CD4-positive, alpha-beta memory T cell (primary cell): ENCODE measurements at regions of chr9 and their contacts with region 1.

Region 1: GRCh38 chr9:126722252-126723078 is 82.4 kb upstream of the ZBTB43 start:
- DNase-seq: peak; percentile 84 to 89 (median 85)
- H3K4me3 ChIP-seq: peak overlapping the region; percentile 29 to 80
- H3K4me3 Mint-ChIP-seq: peak overlapping the region; percentile 86 to 96 (median 90)
- H3K27ac ChIP-seq: peak overlapping the region; percentile 89
- H3K27ac Mint-ChIP-seq: peak overlapping the region; percentile 94 to 99 (median 98)
- H3K4me1 ChIP-seq: peaks cover 40% of the 10 kb centered on the region
- H3K4me1 Mint-ChIP-seq: peaks cover 34 to 55% (median 42%) of the 10 kb centered on the region in 4 donors
- H3K27me3 ChIP-seq: no peaks in the 10 kb centered on the region
- H3K27me3 Mint-ChIP-seq: no peaks in the 10 kb centered on the region

Region 2: DNA sequence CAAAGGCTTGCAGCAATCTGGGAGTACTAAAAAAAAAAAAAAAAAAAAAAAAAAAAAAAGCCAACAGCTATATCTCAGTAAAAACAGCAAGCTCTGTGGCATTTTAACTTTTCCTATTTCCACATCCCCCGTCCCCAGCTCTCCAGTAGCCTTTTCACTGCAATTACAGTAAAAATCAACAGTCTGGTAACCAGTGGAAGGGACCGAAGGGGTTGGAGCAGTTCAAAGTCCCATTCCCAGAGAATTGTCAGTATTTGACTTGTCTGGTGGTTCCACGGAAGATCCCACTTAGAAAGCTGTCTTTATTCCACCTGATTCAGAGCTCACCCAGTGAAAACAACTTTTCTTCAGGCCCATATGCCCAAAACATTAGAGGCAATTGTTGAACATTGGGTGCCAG is 10.5 kb after region 1 on chr9:
- CTCF ChIA-PET with region 1: interaction called, 3 read pairs
- POLR2A ChIA-PET with region 1: interaction called, 13 read pairs
- intact Hi-C with region 1: no loop called
- DNase-seq: no peak
- H3K4me3 ChIP-seq: no peak overlapping the region
- H3K4me3 Mint-ChIP-seq: no peak overlapping the region
- H3K27ac ChIP-seq: no peak overlapping the region
- H3K27ac Mint-ChIP-seq: no peak overlapping the region
- H3K4me1 ChIP-seq: no peaks in the 10 kb centered on the region
- H3K4me1 Mint-ChIP-seq: no peaks in the 10 kb centered on the region
- H3K27me3 ChIP-seq: no peaks in the 10 kb centered on the region
- H3K27me3 Mint-ChIP-seq: peaks cover 0 to 3% of the 10 kb centered on the region in 2 donors

Region 3: DNA sequence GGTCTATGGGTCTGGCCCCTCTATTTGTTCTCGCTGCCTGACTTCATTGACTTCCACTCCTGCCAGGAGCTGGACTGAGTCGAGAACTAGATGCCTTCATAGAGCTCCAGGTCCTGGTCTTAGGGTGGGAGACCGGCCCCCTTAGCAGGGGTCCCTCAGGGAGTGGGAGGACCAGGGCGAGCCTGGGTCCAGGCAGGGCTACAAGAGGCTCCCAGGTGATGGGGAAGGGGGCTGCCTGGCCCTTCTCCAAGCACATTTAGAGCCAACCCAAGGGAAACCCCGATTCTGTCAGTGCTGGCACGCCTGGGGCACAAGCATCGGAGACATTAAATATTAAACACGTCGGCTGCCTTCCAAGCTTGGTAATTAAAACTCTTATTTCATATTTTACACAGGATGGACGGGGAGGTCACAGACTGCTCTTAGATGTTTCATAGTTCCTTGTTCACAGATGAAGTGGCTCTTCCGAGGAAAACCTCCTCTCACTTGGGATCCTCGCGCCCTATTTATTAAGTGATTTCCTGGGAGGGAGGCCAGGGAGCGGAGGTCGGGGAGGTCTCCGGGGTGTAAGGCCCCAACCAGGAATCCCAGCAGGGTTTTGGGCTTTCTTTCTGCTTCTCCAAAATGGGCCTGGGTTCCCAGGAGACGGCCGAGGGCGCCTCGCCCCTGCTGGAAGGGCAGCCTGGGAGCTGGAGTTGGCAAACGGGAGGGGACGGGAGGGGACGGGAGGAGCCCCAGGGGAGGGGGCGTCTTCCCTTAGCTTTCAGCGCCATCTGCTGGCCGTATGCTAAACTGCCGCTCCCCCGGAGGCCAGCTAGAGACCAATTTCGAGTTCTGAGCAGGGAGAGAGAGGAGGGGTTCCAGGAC is 59.0 kb after region 1 on chr9:
- CTCF ChIA-PET with region 1: interaction called, 6 read pairs
- POLR2A ChIA-PET with region 1: interaction called, 11 read pairs
- intact Hi-C with region 1: no loop called
- DNase-seq: peak; percentile 68 to 79 (median 76)
- H3K4me3 ChIP-seq: no peak overlapping the region
- H3K4me3 Mint-ChIP-seq: no peak overlapping the region
- H3K27ac ChIP-seq: no peak overlapping the region
- H3K27ac Mint-ChIP-seq: no peak overlapping the region
- H3K4me1 ChIP-seq: peaks cover 5% of the 10 kb centered on the region
- H3K4me1 Mint-ChIP-seq: peaks cover 0 to 4% (median 2%) of the 10 kb centered on the region in 4 donors
- H3K27me3 ChIP-seq: no peaks in the 10 kb centered on the region
- H3K27me3 Mint-ChIP-seq: peaks cover 11 to 23% of the 10 kb centered on the region in 2 donors

Region 4: DNA sequence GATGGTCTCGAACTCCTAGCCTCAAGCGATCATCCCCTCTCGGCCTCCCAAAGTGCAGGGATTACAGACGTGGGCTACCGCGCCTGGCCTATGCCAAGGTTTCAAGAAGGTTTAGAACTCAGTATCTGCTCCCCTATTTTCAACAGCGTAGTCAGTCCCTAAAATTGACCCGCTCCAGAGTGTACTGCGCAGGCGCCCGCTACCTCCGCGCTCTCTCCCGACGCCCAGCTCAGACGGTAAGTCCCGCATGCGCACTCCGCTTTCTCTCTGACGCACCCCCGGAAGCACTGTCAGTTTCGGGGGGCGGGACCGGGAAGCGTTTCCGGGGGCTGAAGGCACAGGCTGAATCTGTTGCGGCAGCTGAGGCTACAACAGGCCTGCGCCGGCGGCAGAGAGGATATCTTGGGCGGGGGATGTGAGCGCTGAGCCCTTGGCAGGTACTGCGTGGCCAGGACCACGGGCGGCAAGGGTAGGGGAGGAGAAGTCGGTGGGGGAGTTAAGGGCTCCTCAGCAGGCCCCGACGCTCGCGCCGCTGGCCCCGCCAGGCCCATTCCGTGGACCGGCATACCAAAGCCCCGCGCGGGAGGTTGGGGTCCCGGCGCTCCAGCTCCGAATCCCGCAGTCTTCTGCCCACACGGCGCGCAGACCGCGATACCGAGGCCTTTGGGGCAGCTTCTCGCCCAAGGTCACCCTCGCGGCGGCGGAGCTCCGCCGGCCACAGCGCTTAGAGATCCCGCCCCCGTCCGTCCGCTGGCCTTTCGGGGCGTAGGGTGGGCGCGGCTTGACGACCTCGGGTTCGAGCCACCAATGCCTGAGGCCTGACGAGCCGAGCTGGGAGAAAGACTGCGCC is 82.5 kb after region 1 on chr9 and contains the start of gene ZBTB43:
- CTCF ChIA-PET with region 1: no interaction called
- POLR2A ChIA-PET with region 1: interaction called, 23 read pairs
- intact Hi-C with region 1: loop called (anchors 2 kb)
- DNase-seq: peak; percentile 96 to 97 (median 97)
- H3K4me3 ChIP-seq: peak within 1 kb of the TSS; percentile 66 to 85
- H3K4me3 Mint-ChIP-seq: peak within 1 kb of the TSS; percentile 94 to 99 (median 98)
- H3K27ac ChIP-seq: peak within 1 kb of the TSS; percentile 96
- H3K27ac Mint-ChIP-seq: peak within 1 kb of the TSS; percentile 96 to 100 (median 99)
- H3K4me1 ChIP-seq: peaks cover 38% of the 10 kb centered on the region
- H3K4me1 Mint-ChIP-seq: peaks cover 27 to 46% (median 39%) of the 10 kb centered on the region in 4 donors
- H3K27me3 ChIP-seq: no peaks in the 10 kb centered on the region
- H3K27me3 Mint-ChIP-seq: no peaks in the 10 kb centered on the region
- total RNA-seq, gene ZBTB43: 19.9 to 22.7 TPM